Activated naive CD4-positive, alpha-beta T cell treated with anti-CD3 and anti-CD28 coated beads for 36 hours (primary cell): ENCODE measurements at regions of chr5 and their contacts with region 1.

Region 1: GRCh38 chr5:168244838-168245559 is 46.4 kb upstream of the WWC1 start:
- DNase-seq: no peak
- H3K4me3 Mint-ChIP-seq: no peak overlapping the region
- H3K27ac Mint-ChIP-seq: no peak overlapping the region
- H3K4me1 Mint-ChIP-seq: peaks cover 18% of the 10 kb centered on the region
- H3K27me3 Mint-ChIP-seq: peaks cover 3% of the 10 kb centered on the region

Region 2: DNA sequence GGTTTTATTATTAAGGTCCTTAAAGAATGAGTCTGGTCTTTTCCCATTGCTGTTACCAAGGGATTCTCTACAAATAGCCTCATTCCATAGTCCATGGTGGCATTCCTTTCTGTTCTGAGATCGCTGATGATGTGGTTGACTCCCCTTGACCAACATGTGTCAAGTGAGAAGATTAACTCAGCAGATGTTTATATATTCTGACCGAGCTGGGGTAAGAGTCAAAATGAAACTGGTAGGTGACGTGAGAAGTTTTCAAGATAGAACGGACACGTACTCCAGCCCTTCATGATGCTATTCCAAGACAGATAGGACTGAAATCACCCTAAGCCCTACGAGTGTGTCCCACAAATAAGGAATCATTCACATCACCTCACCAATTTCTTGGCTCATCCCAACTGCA is 109.1 kb before region 1 on chr5:
- CTCF ChIA-PET with region 1: no interaction called
- intact Hi-C with region 1: no loop called
- DNase-seq: no peak
- H3K4me3 Mint-ChIP-seq: no peak overlapping the region
- H3K27ac Mint-ChIP-seq: no peak overlapping the region
- H3K4me1 Mint-ChIP-seq: peaks cover 2% of the 10 kb centered on the region
- H3K27me3 Mint-ChIP-seq: peaks cover 6% of the 10 kb centered on the region

Region 3: GRCh38 chr5:168159425-168159824 is 85.6 kb before region 1 on chr5:
- CTCF ChIA-PET with region 1: no interaction called
- intact Hi-C with region 1: no loop called
- DNase-seq: no peak
- H3K4me3 Mint-ChIP-seq: no peak overlapping the region
- H3K27ac Mint-ChIP-seq: no peak overlapping the region
- H3K4me1 Mint-ChIP-seq: no peaks in the 10 kb centered on the region
- H3K27me3 Mint-ChIP-seq: peaks cover 5% of the 10 kb centered on the region

Region 4: GRCh38 chr5:168291464-168291961 is 46.5 kb after region 1 on chr5 and contains the start of gene WWC1:
- CTCF ChIA-PET with region 1: no interaction called
- intact Hi-C with region 1: loop called (anchors 2 kb)
- DNase-seq: peak; percentile 78
- H3K4me3 Mint-ChIP-seq: peak within 1 kb of the TSS; percentile 64
- H3K27ac Mint-ChIP-seq: no peak within 1 kb of the TSS
- H3K4me1 Mint-ChIP-seq: peaks cover 22% of the 10 kb centered on the region
- H3K27me3 Mint-ChIP-seq: peaks cover 39% of the 10 kb centered on the region
- total RNA-seq, gene WWC1: 1.7 to 2.1 TPM

Region 5: GRCh38 chr5:168831383-168831782 is 586.4 kb after region 1 on chr5:
- CTCF ChIA-PET with region 1: no interaction called
- intact Hi-C with region 1: loop called (anchors 10 kb)
- DNase-seq: no peak
- H3K4me3 Mint-ChIP-seq: no peak overlapping the region
- H3K27ac Mint-ChIP-seq: no peak overlapping the region
- H3K4me1 Mint-ChIP-seq: peaks cover 11% of the 10 kb centered on the region
- H3K27me3 Mint-ChIP-seq: peaks cover 16% of the 10 kb centered on the region